OCI-LY7 (cell line): ENCODE measurements at regions of chr14 and their contacts with region 1.

Region 1: DNA sequence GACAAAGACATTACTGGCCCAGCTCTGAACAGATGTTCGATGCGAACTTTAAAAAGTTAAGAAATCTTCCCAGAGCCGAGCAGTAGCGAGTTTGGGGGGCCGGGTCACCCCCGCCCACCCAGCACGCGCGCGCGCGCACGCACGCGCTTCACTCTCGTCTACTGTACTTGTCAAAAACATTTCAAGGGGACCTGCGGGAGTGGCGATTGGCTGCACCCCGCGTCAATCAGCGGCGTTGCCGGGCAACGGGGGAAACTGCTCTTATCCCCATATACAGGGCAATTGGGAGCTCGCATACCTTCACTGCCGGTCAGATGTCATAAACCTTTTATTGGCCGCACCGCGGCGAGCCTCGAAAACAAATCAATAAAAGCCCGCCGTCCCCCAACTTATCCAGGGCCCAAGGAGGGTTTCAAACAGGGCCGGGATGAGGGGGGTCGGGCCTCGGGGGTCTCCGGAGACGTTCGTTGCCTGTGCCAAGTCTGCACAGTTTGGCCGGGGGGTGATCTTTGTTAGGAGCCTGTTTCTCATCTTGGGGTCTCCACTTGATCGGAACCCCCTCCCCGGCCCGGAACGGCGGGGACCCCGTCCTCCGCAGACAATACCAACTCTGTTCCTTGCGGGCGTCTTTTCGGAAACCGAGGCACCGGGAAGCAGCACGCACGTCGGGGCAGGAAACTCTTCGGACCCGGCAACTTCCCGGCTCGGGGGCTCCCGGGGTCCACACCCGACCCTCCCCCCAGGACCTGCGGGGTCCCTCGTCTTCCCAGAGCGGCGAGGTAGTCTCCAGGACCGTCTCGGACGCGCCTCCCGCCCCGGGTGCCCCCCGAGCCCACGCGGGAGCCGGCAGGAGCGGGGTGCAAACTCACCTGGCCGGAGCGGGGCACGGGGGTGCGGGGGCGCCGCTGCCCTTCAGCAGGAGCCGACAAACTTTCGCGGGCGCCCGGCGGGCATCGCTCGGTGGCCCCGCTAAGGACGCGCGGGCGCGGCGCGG is 734 bp downstream of the FOXN3 start:
- DNase-seq: peak; percentile 96
- H3K4me3 ChIP-seq: peak overlapping the region; percentile 99
- H3K27ac ChIP-seq: peak overlapping the region; percentile 70
- H3K4me1 ChIP-seq: peaks cover 42% of the 10 kb centered on the region
- CTCF ChIP-seq: no peak

Region 2: GRCh38 chr14:89040460-89041259 is 375.6 kb before region 1 on chr14:
- CTCF ChIA-PET with region 1: no interaction called
- POLR2A ChIA-PET with region 1: no interaction called
- intact Hi-C with region 1: loop called (anchors 5 kb)
- DNase-seq: peak; percentile 69
- H3K4me3 ChIP-seq: no peak overlapping the region
- H3K27ac ChIP-seq: no peak overlapping the region
- H3K4me1 ChIP-seq: no peaks in the 10 kb centered on the region
- CTCF ChIP-seq: peak; percentile 98

Region 3: DNA sequence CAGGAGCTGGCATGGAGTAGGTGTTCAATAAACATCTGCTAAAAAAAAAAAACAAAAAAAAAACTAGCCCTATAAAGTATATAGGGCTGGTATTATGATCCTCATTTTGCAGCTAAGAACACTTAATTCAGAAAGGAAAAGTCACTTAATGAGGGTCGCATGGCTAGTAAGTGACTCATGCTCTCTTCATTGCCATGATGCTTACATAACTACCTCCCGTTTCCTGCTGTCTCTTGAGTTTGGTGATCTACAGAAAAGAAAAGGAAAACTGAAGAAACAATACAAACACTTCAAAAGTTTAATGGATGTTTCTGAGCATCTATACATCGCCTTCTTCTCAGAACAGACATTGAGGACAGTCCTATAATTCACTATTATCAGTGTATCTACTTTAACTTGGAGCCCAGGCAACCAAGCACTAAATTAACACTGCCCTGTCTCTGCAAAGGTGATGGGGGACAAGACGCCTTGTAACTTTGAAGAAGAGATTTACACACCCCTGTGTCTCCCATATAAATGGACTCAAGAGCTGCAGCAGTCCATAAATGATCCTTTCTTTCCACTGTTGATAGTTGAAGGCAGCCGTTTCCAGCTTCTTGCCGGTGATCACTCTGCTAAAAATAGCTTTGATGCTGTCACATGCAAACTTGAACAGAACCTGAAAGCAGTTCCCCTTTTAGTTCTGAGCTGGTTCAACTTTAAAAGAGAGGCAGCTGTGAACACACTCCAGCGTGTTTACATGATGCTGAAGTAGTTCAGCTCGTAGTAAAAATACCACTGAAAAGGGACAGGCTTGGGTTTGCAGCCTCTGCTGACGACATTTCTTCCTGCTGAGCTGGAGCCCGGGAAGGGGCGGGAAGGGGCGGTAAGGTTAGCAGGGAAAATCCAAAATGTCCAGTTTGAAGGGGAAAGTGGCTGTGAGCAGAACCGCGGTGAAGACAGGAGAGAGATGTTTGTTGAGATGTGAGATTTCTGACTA is 112.6 kb before region 1 on chr14:
- CTCF ChIA-PET with region 1: interaction called, 3 read pairs
- POLR2A ChIA-PET with region 1: interaction called, 6 read pairs
- intact Hi-C with region 1: loop called (anchors 1 kb)
- DNase-seq: peak; percentile 94
- H3K4me3 ChIP-seq: peak overlapping the region; percentile 65
- H3K27ac ChIP-seq: peak overlapping the region; percentile 99
- H3K4me1 ChIP-seq: peaks cover 65% of the 10 kb centered on the region
- CTCF ChIP-seq: no peak

Region 4: DNA sequence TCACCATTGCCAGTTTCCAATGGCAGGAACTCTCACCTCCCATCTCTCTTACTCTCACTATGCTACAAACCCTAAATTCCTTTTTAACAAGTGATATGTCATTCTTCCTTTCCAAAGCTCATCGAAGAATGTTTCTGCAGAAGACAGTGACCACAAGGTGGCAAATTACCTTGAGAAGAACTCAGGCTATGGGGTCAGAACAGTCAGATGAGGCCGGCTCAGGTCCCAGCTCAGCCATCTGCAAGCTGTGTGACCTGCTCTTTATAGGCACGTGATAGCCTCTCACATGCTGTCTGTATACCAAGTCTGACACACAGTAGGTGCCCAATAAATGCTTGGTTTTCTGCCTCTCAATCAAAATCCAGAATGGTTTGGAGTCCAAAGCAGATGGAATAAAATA is 80.0 kb before region 1 on chr14:
- CTCF ChIA-PET with region 1: no interaction called
- POLR2A ChIA-PET with region 1: interaction called, 3 read pairs
- intact Hi-C with region 1: loop called (anchors 1 kb)
- DNase-seq: peak; percentile 82
- H3K4me3 ChIP-seq: no peak overlapping the region
- H3K27ac ChIP-seq: no peak overlapping the region
- H3K4me1 ChIP-seq: peaks cover 83% of the 10 kb centered on the region
- CTCF ChIP-seq: peak; percentile 77

Region 5: GRCh38 chr14:89384023-89384422 is 32.3 kb before region 1 on chr14:
- CTCF ChIA-PET with region 1: no interaction called
- POLR2A ChIA-PET with region 1: interaction called, 3 read pairs
- intact Hi-C with region 1: loop called (anchors 1 kb)
- DNase-seq: peak; percentile 98
- H3K4me3 ChIP-seq: peak overlapping the region; percentile 53
- H3K27ac ChIP-seq: peak overlapping the region; percentile 91
- H3K4me1 ChIP-seq: peaks cover 81% of the 10 kb centered on the region
- CTCF ChIP-seq: no peak

Region 6: GRCh38 chr14:89767861-89768268 is 351.6 kb after region 1 on chr14:
- CTCF ChIA-PET with region 1: no interaction called
- POLR2A ChIA-PET with region 1: interaction called, 4 read pairs
- intact Hi-C with region 1: loop called (anchors 2 kb)
- DNase-seq: peak; percentile 81
- H3K4me3 ChIP-seq: no peak overlapping the region
- H3K27ac ChIP-seq: no peak overlapping the region
- H3K4me1 ChIP-seq: peaks cover 37% of the 10 kb centered on the region
- CTCF ChIP-seq: peak; percentile 94